Activated CD4-positive, alpha-beta T cell treated with anti-CD3 and anti-CD28 coated beads for 36 hours (primary cell): ENCODE measurements at regions of chr4 and their contacts with region 1.

Region 1: GRCh38 chr4:47836641-47837093 is 1.2 kb downstream of the CORIN start:
- DNase-seq: peak; percentile 78
- ATAC-seq: peak; percentile 73
- H3K4me3 Mint-ChIP-seq: peak overlapping the region; percentile 71
- H3K27ac Mint-ChIP-seq: no peak overlapping the region
- H3K4me1 Mint-ChIP-seq: peaks cover 26% of the 10 kb centered on the region
- H3K27me3 Mint-ChIP-seq: peaks cover 5% of the 10 kb centered on the region

Region 2: GRCh38 chr4:47432749-47433148 is 403.9 kb before region 1 on chr4:
- CTCF ChIA-PET with region 1: no interaction called
- POLR2A ChIA-PET with region 1: no interaction called
- intact Hi-C with region 1: no loop called
- DNase-seq: no peak
- ATAC-seq: no peak
- H3K4me3 Mint-ChIP-seq: no peak overlapping the region
- H3K27ac Mint-ChIP-seq: no peak overlapping the region
- H3K4me1 Mint-ChIP-seq: no peaks in the 10 kb centered on the region
- H3K27me3 Mint-ChIP-seq: no peaks in the 10 kb centered on the region

Region 3: GRCh38 chr4:47668810-47669408 is 167.8 kb before region 1 on chr4:
- CTCF ChIA-PET with region 1: interaction called, 8 read pairs
- POLR2A ChIA-PET with region 1: no interaction called
- intact Hi-C with region 1: loop called in 1 of 2 experiments (anchors 5 kb)
- DNase-seq: peak; percentile 15
- ATAC-seq: peak; percentile 47
- H3K4me3 Mint-ChIP-seq: no peak overlapping the region
- H3K27ac Mint-ChIP-seq: no peak overlapping the region
- H3K4me1 Mint-ChIP-seq: no peaks in the 10 kb centered on the region
- H3K27me3 Mint-ChIP-seq: peaks cover 17% of the 10 kb centered on the region

Region 4: GRCh38 chr4:47704693-47705325 is 131.9 kb before region 1 on chr4:
- CTCF ChIA-PET with region 1: interaction called, 10 read pairs
- POLR2A ChIA-PET with region 1: no interaction called
- intact Hi-C with region 1: loop called (anchors 1 to 2 kb)
- DNase-seq: peak; percentile 44
- ATAC-seq: peak; percentile 58
- H3K4me3 Mint-ChIP-seq: no peak overlapping the region
- H3K27ac Mint-ChIP-seq: no peak overlapping the region
- H3K4me1 Mint-ChIP-seq: no peaks in the 10 kb centered on the region
- H3K27me3 Mint-ChIP-seq: peaks cover 17% of the 10 kb centered on the region

Region 5: DNA sequence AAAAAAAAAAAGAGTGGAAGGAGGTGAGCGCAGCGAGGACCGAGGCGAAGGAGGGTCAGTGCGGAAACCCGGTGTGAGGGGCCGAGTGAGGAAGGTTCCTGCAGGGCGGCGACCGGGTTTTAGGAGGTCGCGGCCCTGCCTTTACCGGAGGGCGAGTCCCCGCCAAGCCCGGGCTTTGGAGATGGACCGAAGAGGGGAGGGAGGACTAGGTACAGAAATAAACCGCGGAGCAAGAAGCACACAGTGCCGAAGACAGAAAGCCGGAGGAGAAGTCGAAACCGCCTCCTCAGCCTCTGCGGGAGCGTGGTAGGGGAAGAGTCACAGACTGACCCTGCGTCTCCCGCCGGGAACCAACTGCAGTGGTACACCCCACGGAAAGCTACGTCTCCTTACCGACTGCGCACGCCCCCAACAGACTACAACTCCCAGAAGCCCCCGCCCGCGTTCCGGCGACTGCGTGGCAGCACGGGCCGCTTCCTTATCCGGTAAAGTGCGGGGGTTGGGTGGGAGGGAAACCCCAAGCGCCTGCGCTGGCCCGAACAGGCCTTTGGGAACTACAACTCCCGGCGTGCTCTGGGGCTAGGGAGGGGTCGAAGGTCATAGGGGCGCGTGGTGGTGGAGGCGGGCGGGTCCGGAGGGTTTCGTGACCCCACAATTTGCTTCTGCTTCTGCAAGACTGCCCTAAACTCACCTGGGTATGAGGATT is 77.7 kb after region 1 on chr4 and contains the start of gene NFXL1:
- CTCF ChIA-PET with region 1: no interaction called
- POLR2A ChIA-PET with region 1: interaction called, 6 read pairs
- intact Hi-C with region 1: loop called (anchors 2 to 5 kb)
- DNase-seq: peak; percentile 98
- ATAC-seq: peak; percentile 97
- H3K4me3 Mint-ChIP-seq: peak within 1 kb of the TSS; percentile 94
- H3K27ac Mint-ChIP-seq: peak within 1 kb of the TSS; percentile 90
- H3K4me1 Mint-ChIP-seq: peaks cover 25% of the 10 kb centered on the region
- H3K27me3 Mint-ChIP-seq: no peaks in the 10 kb centered on the region
- total RNA-seq, gene NFXL1: 12.6 to 14.4 TPM

Region 6: GRCh38 chr4:47972181-47972580 is 135.5 kb after region 1 on chr4:
- CTCF ChIA-PET with region 1: no interaction called
- POLR2A ChIA-PET with region 1: no interaction called
- intact Hi-C with region 1: no loop called
- DNase-seq: no peak
- ATAC-seq: no peak
- H3K4me3 Mint-ChIP-seq: no peak overlapping the region
- H3K27ac Mint-ChIP-seq: no peak overlapping the region
- H3K4me1 Mint-ChIP-seq: no peaks in the 10 kb centered on the region
- H3K27me3 Mint-ChIP-seq: peaks cover 2% of the 10 kb centered on the region

Region 7: GRCh38 chr4:48093949-48094550 is 257.4 kb after region 1 on chr4:
- CTCF ChIA-PET with region 1: interaction called, 4 read pairs
- POLR2A ChIA-PET with region 1: no interaction called
- intact Hi-C with region 1: loop called in 1 of 2 experiments (anchors 5 kb)
- DNase-seq: peak; percentile 75
- ATAC-seq: peak; percentile 100
- H3K4me3 Mint-ChIP-seq: no peak overlapping the region
- H3K27ac Mint-ChIP-seq: peak overlapping the region; percentile 56
- H3K4me1 Mint-ChIP-seq: peaks cover 22% of the 10 kb centered on the region
- H3K27me3 Mint-ChIP-seq: no peaks in the 10 kb centered on the region

Region 8: GRCh38 chr4:48269861-48270522 is 433.3 kb after region 1 on chr4:
- CTCF ChIA-PET with region 1: no interaction called
- POLR2A ChIA-PET with region 1: no interaction called
- intact Hi-C with region 1: loop called in 1 of 2 experiments (anchors 2 kb)
- DNase-seq: peak; percentile 97
- ATAC-seq: peak; percentile 95
- H3K4me3 Mint-ChIP-seq: peak overlapping the region; percentile 89
- H3K27ac Mint-ChIP-seq: peak overlapping the region; percentile 93
- H3K4me1 Mint-ChIP-seq: peaks cover 17% of the 10 kb centered on the region
- H3K27me3 Mint-ChIP-seq: no peaks in the 10 kb centered on the region